WTC11 (cell line): ENCODE measurements at regions of chr22 and their contacts with region 1.

Region 1: GRCh38 chr22:36065775-36066559 is 37.3 kb upstream of the RBFOX2 start:
- DNase-seq: peak; percentile 94
- ATAC-seq: peak; percentile 92
- H3K4me3 Mint-ChIP-seq: peak overlapping the region; percentile 84
- H3K27ac Mint-ChIP-seq: peak overlapping the region; percentile 87
- H3K4me1 Mint-ChIP-seq: peaks cover 7% of the 10 kb centered on the region; the same call in 1 of the 2 replicates
- H3K27me3 Mint-ChIP-seq: no peaks in the 10 kb centered on the region; the same call in 1 of the 2 replicates
- CTCF ChIP-seq: peak; percentile 100

Region 2: DNA sequence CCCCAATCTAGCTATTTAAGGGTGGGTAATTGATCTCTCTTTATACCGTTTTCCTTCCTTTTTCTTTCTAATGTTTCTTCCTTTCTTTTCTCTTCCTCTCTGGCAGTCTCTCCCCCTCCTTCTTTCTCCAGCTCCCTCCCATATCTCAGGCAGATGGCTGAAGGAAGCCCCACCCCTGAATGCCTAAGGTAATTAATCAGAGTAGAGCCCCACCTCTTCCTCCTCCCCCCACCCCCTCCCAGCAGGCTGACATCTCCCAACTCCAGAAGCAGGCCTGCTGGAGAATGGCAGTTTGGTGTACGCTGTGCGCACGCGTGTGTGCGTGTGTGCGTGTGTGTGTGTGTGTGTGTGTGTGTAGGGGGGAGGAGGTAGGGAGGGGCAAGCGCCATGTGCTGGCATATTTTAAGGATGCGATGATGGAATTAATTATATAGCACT is 225.6 kb before region 1 on chr22:
- CTCF ChIA-PET with region 1: interaction called, 12 read pairs
- POLR2A ChIA-PET with region 1: no interaction called
- DNase-seq: peak; percentile 78
- ATAC-seq: peak; percentile 91
- H3K4me3 Mint-ChIP-seq: peak overlapping the region; percentile 91
- H3K27ac Mint-ChIP-seq: peak overlapping the region; percentile 95
- H3K4me1 Mint-ChIP-seq: peaks cover 64% of the 10 kb centered on the region
- H3K27me3 Mint-ChIP-seq: no peaks in the 10 kb centered on the region
- CTCF ChIP-seq: no peak

Region 3: GRCh38 chr22:35950262-35950661 is 115.7 kb before region 1 on chr22:
- CTCF ChIA-PET with region 1: interaction called, 12 read pairs
- POLR2A ChIA-PET with region 1: no interaction called
- DNase-seq: no peak
- ATAC-seq: peak; percentile 71
- H3K4me3 Mint-ChIP-seq: no peak overlapping the region
- H3K27ac Mint-ChIP-seq: no peak overlapping the region
- H3K4me1 Mint-ChIP-seq: no peaks in the 10 kb centered on the region
- H3K27me3 Mint-ChIP-seq: no peaks in the 10 kb centered on the region
- CTCF ChIP-seq: no peak

Region 4: GRCh38 chr22:36010882-36011281 is 55.1 kb before region 1 on chr22:
- CTCF ChIA-PET with region 1: interaction called, 22 read pairs
- POLR2A ChIA-PET with region 1: no interaction called
- DNase-seq: no peak
- ATAC-seq: no peak
- H3K4me3 Mint-ChIP-seq: no peak overlapping the region
- H3K27ac Mint-ChIP-seq: peak overlapping the region; percentile 98
- H3K4me1 Mint-ChIP-seq: peaks cover 62% of the 10 kb centered on the region
- H3K27me3 Mint-ChIP-seq: no peaks in the 10 kb centered on the region
- CTCF ChIP-seq: no peak

Region 5: GRCh38 chr22:36081023-36081431 is 15.1 kb after region 1 on chr22:
- CTCF ChIA-PET with region 1: interaction called, 82 read pairs
- POLR2A ChIA-PET with region 1: no interaction called
- DNase-seq: no peak
- ATAC-seq: no peak
- H3K4me3 Mint-ChIP-seq: no peak overlapping the region
- H3K27ac Mint-ChIP-seq: no peak overlapping the region
- H3K4me1 Mint-ChIP-seq: peaks cover 10% of the 10 kb centered on the region
- H3K27me3 Mint-ChIP-seq: no peaks in the 10 kb centered on the region
- CTCF ChIP-seq: no peak

Region 6: GRCh38 chr22:36117053-36117554 is 51.1 kb after region 1 on chr22:
- CTCF ChIA-PET with region 1: interaction called, 18 read pairs
- POLR2A ChIA-PET with region 1: no interaction called
- DNase-seq: no peak
- ATAC-seq: no peak
- H3K4me3 Mint-ChIP-seq: no peak overlapping the region
- H3K27ac Mint-ChIP-seq: no peak overlapping the region
- H3K4me1 Mint-ChIP-seq: peaks cover 10% of the 10 kb centered on the region; the same call in 1 of the 2 replicates
- H3K27me3 Mint-ChIP-seq: no peaks in the 10 kb centered on the region
- CTCF ChIP-seq: no peak